Caco-2 (cell line): ENCODE measurements at regions of chr10 and their contacts with region 1.

Region 1: DNA sequence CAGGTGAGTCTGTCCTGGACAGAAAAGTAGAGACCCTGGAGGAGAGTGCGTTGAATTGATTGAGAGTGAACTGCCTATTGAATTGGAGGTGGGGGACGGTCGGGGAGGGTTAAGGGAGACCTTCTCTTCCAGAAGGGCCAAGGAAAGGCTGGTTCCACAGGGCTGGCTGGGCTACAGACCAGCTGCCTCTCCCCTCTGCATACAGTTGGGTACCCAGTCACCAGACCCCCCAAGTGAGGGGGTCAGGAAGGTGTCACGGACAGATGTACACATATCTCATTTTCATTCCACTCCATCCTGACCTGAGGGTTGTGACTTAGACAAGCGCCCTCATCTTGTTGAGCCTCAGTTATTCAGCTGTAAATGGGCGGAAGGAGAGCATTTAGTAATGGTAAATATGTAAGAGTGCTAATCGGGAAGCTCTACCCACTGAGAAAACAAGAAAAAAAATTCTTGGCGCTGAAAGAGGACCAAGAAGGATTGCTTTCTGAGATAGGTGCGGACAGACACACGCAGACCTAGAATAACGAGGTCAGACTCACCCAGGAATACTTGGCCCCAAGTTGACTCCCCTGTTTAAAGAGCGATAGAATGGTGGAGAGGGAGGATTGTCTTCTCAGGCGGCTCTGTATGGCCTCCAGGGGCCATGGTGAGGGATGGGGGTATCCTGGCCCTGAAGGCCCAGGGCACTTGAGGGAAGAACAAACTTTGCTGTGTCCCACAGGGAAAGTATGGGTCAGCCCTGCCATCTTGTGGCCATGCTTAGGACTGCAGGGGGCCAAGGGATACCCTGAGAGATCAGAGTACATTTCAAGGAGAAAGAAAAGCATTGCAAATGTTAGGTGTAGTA is 7.2 kb upstream of the MBL2 start:
- DNase-seq: peak; percentile 89 to 96
- H3K4me3 ChIP-seq: no peak overlapping the region
- H3K4me3 Mint-ChIP-seq: no peak overlapping the region
- H3K27ac Mint-ChIP-seq: peak overlapping the region; percentile 5
- H3K4me1 ChIP-seq: peaks cover 12% of the 10 kb centered on the region
- H3K4me1 Mint-ChIP-seq: peaks cover 27% of the 10 kb centered on the region
- H3K27me3 ChIP-seq: no peaks in the 10 kb centered on the region
- H3K27me3 Mint-ChIP-seq: no peaks in the 10 kb centered on the region
- CTCF ChIP-seq: peak; percentile 100

Region 2: GRCh38 chr10:52740913-52741675 is 38.7 kb before region 1 on chr10:
- CTCF ChIA-PET with region 1: interaction called, 32 read pairs
- POLR2A ChIA-PET with region 1: no interaction called
- intact Hi-C with region 1: loop called (anchors 1 kb)
- DNase-seq: peak; percentile 83 to 87
- H3K4me3 ChIP-seq: no peak overlapping the region
- H3K4me3 Mint-ChIP-seq: no peak overlapping the region
- H3K27ac Mint-ChIP-seq: no peak overlapping the region
- H3K4me1 ChIP-seq: no peaks in the 10 kb centered on the region
- H3K4me1 Mint-ChIP-seq: no peaks in the 10 kb centered on the region
- H3K27me3 ChIP-seq: no peaks in the 10 kb centered on the region
- H3K27me3 Mint-ChIP-seq: no peaks in the 10 kb centered on the region
- CTCF ChIP-seq: peak; percentile 100